Activated CD4-positive, alpha-beta T cell treated with anti-CD3 and anti-CD28 coated beads, Interleukin-2, amount 10 ng/mL, durations not matched to agents 24 days and 14 days (primary cell): ENCODE measurements at regions of chr10 and their contacts with region 1.

Region 1: GRCh38 chr10:93816123-93816747 is 58.5 kb downstream of the LGI1 start:
- DNase-seq: peak; percentile 74
- H3K4me3 Mint-ChIP-seq: no peak overlapping the region
- H3K27ac Mint-ChIP-seq: no peak overlapping the region
- H3K4me1 Mint-ChIP-seq: no peaks in the 10 kb centered on the region
- H3K27me3 Mint-ChIP-seq: peaks cover 41% of the 10 kb centered on the region

Region 2: GRCh38 chr10:93554760-93555432 is 261.3 kb before region 1 on chr10:
- intact Hi-C with region 1: loop called (anchors 2 kb)
- DNase-seq: peak; percentile 81
- H3K4me3 Mint-ChIP-seq: no peak overlapping the region
- H3K27ac Mint-ChIP-seq: no peak overlapping the region
- H3K4me1 Mint-ChIP-seq: no peaks in the 10 kb centered on the region
- H3K27me3 Mint-ChIP-seq: peaks cover 6% of the 10 kb centered on the region

Region 3: DNA sequence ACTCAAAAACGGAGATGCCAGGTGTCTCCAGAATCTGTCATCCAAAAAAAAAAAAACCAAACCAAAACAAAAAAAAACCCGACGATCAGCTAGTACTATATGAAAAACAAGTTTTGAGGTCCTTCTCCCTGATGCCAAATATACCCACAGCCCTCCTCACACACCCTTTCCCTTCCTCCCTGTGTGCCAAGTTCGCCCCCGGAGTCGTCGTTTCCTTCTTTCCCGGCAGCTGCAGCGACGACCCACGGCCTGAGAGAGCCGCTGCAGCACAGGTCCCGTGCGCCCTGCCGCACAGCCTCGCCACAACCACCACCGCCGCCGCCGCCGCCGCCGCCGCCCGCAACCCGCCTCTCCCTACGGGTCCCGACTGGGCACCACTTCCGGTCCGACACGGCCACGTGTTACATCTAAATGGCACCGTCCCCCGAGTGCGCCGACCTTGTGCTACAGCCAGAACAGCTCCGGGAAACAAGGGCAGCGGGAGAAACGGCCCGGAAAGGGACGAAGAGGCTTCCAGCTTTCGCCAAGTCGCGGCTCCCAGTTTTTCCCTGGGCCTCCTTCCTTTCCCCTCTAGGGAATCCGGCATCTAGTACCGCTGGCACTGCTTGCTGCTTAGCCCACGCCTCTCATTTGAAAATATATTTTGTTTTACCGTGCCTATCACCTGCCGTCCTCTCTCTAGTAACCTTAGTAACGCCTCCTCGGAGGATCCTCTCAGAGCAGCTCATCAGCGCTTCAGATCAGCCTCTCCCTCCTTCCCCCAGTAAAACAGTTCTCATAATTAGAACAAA is 113.8 kb before region 1 on chr10 and contains the start of gene FRA10AC1:
- intact Hi-C with region 1: loop called (anchors 10 kb)
- DNase-seq: peak; percentile 97
- H3K4me3 Mint-ChIP-seq: no peak within 1 kb of the TSS
- H3K27ac Mint-ChIP-seq: no peak within 1 kb of the TSS
- H3K4me1 Mint-ChIP-seq: peaks cover 10% of the 10 kb centered on the region
- H3K27me3 Mint-ChIP-seq: no peaks in the 10 kb centered on the region
- total RNA-seq, gene FRA10AC1: 22.5 and 22.8 TPM in 2 replicates

Region 4: DNA sequence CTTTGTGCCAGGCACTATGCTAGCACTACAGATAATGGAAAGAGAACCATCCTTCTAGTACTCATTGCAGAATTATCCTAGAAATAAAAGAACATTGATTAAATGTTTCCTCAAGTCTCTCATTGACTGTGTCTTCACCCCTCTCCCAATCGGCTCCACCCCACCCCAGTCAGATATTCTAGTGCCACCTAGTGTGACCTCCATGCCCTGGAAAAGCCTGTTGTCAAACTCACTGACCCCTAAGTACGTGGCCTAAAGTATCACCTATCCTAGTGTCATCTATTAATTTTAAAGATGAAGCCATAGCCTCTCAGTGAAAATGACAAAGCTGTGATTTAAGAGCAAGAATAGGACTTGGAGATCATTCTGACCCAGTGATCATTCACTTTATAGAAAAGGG is 32.2 kb before region 1 on chr10:
- intact Hi-C with region 1: no loop called
- DNase-seq: no peak
- H3K4me3 Mint-ChIP-seq: no peak overlapping the region
- H3K27ac Mint-ChIP-seq: no peak overlapping the region
- H3K4me1 Mint-ChIP-seq: no peaks in the 10 kb centered on the region
- H3K27me3 Mint-ChIP-seq: peaks cover 8% of the 10 kb centered on the region

Region 5: DNA sequence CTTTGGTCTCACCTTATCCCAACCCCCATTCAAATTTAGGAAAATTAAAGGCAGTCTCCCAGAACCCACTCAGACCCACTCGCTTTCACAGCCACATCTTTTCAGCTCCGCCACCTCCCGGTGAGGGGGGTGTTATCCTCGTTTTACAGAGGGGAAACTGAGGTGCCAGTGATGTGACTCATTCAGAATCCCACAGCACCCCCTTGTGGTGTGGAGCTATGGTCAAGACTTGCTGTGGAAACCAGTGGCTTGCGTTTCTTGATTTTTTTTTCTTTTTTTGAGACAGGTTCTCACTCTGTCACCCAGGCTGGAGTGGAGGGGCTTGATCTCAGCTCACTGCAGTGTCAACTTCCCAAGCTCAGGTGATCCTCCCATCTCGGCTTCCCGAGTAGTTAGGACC is 105.1 kb after region 1 on chr10:
- intact Hi-C with region 1: loop called (anchors 2 kb)
- DNase-seq: peak; percentile 74
- H3K4me3 Mint-ChIP-seq: no peak overlapping the region
- H3K27ac Mint-ChIP-seq: no peak overlapping the region
- H3K4me1 Mint-ChIP-seq: peaks cover 3% of the 10 kb centered on the region
- H3K27me3 Mint-ChIP-seq: no peaks in the 10 kb centered on the region

Region 6: DNA sequence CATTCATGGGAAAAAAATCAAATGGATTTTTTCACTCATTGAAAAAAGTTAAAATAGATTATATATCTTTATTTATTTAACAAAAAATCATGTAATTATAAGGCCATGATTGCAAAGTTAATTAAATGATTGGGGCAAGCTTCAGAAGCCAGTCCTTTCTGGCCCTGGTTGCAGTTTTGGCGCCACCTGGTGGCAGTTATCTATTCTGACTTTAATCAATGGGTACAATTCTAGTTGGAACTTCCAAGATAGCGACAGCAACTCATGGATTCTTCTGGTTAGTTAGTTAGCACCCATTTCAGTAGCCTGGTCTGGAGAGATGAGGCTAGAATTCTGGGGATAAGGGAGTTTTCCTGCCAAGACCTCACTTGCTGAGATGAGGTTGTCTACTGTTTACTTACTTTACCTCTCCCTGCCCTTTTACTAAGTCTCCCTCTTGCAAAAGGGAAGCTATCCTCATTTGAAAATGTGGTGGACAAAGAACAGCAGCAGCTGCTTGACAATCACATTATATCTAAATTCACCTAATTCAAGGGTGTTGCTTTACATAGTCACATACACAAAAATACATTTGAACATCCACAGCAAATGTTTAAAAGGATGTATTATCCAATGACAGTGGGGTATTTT is 504.2 kb after region 1 on chr10:
- intact Hi-C with region 1: loop called (anchors 5 kb)
- DNase-seq: peak; percentile 88
- H3K4me3 Mint-ChIP-seq: no peak overlapping the region
- H3K27ac Mint-ChIP-seq: no peak overlapping the region
- H3K4me1 Mint-ChIP-seq: peaks cover 2% of the 10 kb centered on the region
- H3K27me3 Mint-ChIP-seq: no peaks in the 10 kb centered on the region

Region 7: DNA sequence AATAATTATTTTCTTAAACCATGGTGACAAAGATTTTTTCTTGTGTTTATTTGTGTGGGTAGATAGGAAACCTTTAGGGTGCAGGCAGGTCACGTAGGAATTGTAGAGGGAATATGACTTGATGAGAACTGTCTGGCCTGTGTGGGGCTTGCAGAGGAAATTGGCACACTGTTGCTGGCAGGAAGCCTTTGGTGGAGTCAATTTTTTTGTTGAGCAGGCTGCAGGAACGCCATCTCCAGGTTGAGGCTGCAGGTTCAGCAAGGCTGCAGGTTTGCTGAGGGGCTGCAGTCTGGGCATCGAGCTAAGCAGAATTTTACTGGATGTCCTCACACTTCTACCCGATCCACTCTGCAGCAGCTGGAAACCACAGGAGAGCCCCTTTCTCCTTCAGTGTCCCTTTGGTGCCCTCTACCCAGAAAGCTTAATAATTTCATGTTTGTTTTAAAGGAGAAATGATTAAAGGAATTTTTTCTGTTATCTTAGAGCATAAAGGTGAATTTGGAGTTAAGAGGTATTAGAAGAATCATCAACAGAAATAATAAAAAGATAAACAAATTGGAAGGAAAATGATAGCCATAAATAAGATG is 623.1 kb after region 1 on chr10:
- intact Hi-C with region 1: loop called (anchors 10 kb)
- DNase-seq: no peak
- H3K4me3 Mint-ChIP-seq: no peak overlapping the region
- H3K27ac Mint-ChIP-seq: no peak overlapping the region
- H3K4me1 Mint-ChIP-seq: no peaks in the 10 kb centered on the region
- H3K27me3 Mint-ChIP-seq: peaks cover 3% of the 10 kb centered on the region